ENCODE measurements at regions of chr9 and their contacts with region 1.

Region 1: DNA sequence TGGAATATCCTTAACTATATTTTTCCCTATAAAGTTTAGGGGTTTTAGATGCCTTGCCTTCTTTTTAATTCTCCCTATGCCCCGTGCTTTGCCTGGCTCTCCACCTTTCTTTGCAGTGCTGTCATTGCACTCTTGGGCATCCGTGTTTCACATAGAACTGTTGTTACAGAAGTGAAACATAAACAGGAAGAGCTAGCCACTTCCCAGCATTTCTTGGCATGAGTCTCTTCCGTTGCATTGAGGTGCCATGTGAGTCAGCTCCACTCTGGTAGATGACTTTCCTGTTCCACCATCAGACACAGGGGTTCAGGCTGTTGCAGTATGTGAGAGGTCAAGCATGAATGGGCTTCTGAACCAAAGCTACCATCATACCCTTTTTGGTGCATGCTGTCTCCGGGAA is 73.4 kb downstream of the ANGPTL2 start:
- DNase-seq: peak in 1 of 2 donors; percentile 49
- ATAC-seq: peak; percentile 71 to 90 (median 79)
- H3K4me3 ChIP-seq: no peak overlapping the region
- H3K4me3 Mint-ChIP-seq: peak overlapping the region; percentile 57
- H3K27ac ChIP-seq: no peak overlapping the region
- H3K27ac Mint-ChIP-seq: peak overlapping the region; percentile 56 to 63
- H3K4me1 ChIP-seq: peaks cover 13% of the 10 kb centered on the region
- H3K4me1 Mint-ChIP-seq: peaks cover 22 to 26% of the 10 kb centered on the region in 2 donors
- H3K27me3 ChIP-seq: no peaks in the 10 kb centered on the region
- H3K27me3 Mint-ChIP-seq: no peaks in the 10 kb centered on the region
- CTCF ChIP-seq: no peak

Region 2: GRCh38 chr9:126885131-126885641 is 163.9 kb before region 1 on chr9:
- intact Hi-C with region 1: no loop called
- DNase-seq: no peak
- ATAC-seq: no peak
- H3K4me3 ChIP-seq: no peak overlapping the region
- H3K4me3 Mint-ChIP-seq: no peak overlapping the region
- H3K27ac ChIP-seq: no peak overlapping the region
- H3K27ac Mint-ChIP-seq: no peak overlapping the region
- H3K4me1 ChIP-seq: no peaks in the 10 kb centered on the region
- H3K4me1 Mint-ChIP-seq: peaks cover 5 to 7% of the 10 kb centered on the region in 2 donors
- H3K27me3 ChIP-seq: no peaks in the 10 kb centered on the region
- H3K27me3 Mint-ChIP-seq: no peaks in the 10 kb centered on the region
- CTCF ChIP-seq: no peak

Region 3: DNA sequence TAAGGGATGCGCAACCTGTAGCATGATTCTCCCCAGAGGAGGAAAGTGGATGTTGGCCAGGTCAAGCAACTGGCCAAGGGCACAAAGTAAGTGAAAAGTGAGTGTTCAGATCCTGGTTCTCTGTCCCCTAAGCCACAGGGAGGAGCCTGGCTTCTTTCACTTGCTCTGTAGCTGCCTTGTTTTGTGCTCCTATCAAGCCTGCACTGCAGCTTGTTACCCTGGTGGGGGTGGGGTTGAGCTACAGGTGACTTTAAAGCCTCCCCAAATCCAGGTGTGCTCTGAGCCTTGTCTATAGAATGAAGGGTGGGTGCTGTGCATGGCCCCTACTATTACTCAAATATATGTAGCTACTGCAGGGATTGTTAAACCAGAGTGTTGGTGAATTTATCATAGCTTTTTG is 101.5 kb before region 1 on chr9:
- intact Hi-C with region 1: loop called (anchors 10 kb)
- DNase-seq: peak in 1 of 2 donors; percentile 29
- ATAC-seq: no peak
- H3K4me3 ChIP-seq: no peak overlapping the region
- H3K4me3 Mint-ChIP-seq: no peak overlapping the region
- H3K27ac ChIP-seq: no peak overlapping the region
- H3K27ac Mint-ChIP-seq: no peak overlapping the region
- H3K4me1 ChIP-seq: no peaks in the 10 kb centered on the region
- H3K4me1 Mint-ChIP-seq: no peaks in the 10 kb centered on the region
- H3K27me3 ChIP-seq: no peaks in the 10 kb centered on the region
- H3K27me3 Mint-ChIP-seq: peaks cover under 1 to 3% of the 10 kb centered on the region in 2 donors
- CTCF ChIP-seq: no peak

Region 4: DNA sequence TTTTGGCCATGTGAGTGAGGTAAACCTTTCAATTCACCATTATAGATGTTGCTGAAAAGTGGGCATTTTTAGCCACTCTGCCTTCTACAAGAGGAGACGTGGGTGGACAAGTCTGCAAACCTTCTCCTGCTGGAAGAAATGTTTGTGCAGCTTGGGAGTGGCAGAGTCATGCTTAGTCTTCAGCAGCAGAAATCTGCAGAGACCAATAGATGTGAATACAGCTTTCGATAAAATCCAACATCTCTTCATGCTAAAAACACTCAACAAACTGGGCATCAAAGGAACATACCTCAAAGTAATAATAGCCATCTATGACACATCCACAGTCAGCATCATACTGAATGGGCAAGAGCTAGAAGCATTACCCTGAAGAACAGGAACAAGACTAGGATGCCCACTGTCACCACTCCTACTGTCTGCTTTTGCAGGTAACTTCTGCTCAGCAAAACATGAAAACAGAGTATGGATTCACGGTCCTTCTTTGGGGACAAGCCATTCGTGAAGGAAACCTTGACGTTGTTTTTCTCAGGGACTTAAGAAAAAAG is 43.2 kb before region 1 on chr9:
- intact Hi-C with region 1: no loop called
- DNase-seq: no peak
- ATAC-seq: peak in 1 of 3 donors; percentile 10
- H3K4me3 ChIP-seq: no peak overlapping the region
- H3K4me3 Mint-ChIP-seq: no peak overlapping the region
- H3K27ac ChIP-seq: peak overlapping the region; percentile 3
- H3K27ac Mint-ChIP-seq: peak overlapping the region; percentile 79 to 88
- H3K4me1 ChIP-seq: peaks cover 13% of the 10 kb centered on the region
- H3K4me1 Mint-ChIP-seq: peaks cover 31 to 35% of the 10 kb centered on the region in 2 donors
- H3K27me3 ChIP-seq: no peaks in the 10 kb centered on the region
- H3K27me3 Mint-ChIP-seq: peaks cover 8 to 17% of the 10 kb centered on the region in 2 donors
- CTCF ChIP-seq: no peak

Region 5: GRCh38 chr9:127396808-127397497 is 347.9 kb after region 1 on chr9 and contains the start of gene SLC2A8:
- intact Hi-C with region 1: no loop called
- DNase-seq: peak; percentile 96 to 97
- ATAC-seq: peak; percentile 90 to 98 (median 92)
- H3K4me3 ChIP-seq: peak within 1 kb of the TSS; percentile 43
- H3K4me3 Mint-ChIP-seq: peak within 1 kb of the TSS; percentile 83
- H3K27ac ChIP-seq: no peak within 1 kb of the TSS
- H3K27ac Mint-ChIP-seq: peak within 1 kb of the TSS; percentile 57 to 84
- H3K4me1 ChIP-seq: peaks cover 23% of the 10 kb centered on the region
- H3K4me1 Mint-ChIP-seq: peaks cover 9 to 13% of the 10 kb centered on the region in 2 donors
- H3K27me3 ChIP-seq: peaks cover 14% of the 10 kb centered on the region
- H3K27me3 Mint-ChIP-seq: peaks cover 11 to 14% of the 10 kb centered on the region in 2 donors
- CTCF ChIP-seq: no peak
- total RNA-seq, gene SLC2A8: 21.1 to 30.6 (median 30.0) TPM

Measured in natural killer cell (primary cell).